Aorta (tissue), 5 donors: ENCODE measurements at regions of chr12 and their contacts with region 1.

Region 1: DNA sequence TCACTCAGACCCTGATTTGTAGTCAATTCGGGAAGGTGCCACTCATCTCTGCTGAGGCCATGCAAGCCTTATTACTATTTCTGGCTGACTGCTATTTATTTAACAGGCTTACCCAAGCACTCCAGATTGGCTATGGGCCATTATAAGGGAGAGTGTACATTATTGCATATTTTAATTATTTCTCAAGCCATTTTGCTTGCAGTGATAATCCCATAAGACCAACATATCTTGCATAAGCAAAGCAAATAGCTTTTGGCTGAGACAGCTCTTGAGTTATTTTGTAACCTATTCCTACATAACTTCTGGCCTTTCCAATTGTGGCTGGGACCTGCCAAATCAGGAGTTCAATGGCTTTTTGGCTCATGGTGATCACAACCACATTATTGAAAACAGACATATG is 509.6 kb upstream of the USP15 start:
- DNase-seq: no peak
- ATAC-seq: no peak
- H3K4me3 ChIP-seq: no peak overlapping the region
- H3K27ac ChIP-seq: peak overlapping the region; percentile 19 to 25
- H3K4me1 ChIP-seq: no peaks in the 10 kb centered on the region
- H3K27me3 ChIP-seq: no peaks in the 10 kb centered on the region

Region 2: GRCh38 chr12:61701471-61701870 is 49.1 kb before region 1 on chr12:
- intact Hi-C with region 1: loop called in 1 of 2 experiments (anchors 2 kb)
- DNase-seq: no peak
- ATAC-seq: no peak
- H3K4me3 ChIP-seq: no peak overlapping the region
- H3K27ac ChIP-seq: no peak overlapping the region
- H3K4me1 ChIP-seq: peaks cover 0 to 3% of the 10 kb centered on the region in 2 donors
- H3K27me3 ChIP-seq: no peaks in the 10 kb centered on the region

Region 3: DNA sequence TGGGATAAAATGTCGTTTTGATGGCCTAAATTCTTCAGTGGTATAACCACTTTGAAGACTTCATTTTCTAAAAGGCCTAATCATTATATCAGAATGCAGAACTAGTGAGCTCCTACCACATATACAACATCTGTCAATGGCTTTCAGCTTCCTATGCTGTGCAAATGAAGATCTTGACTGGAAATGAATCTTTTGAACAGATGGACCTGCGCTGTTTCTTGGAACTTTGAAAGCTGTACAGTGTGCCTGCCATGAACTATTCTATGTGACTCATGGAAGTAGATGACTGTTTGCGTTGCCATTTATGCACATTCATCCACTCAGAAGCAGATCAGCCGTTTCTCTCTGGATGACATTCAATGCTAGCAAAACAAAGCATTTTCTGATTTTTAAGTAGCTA is 32.6 kb before region 1 on chr12:
- intact Hi-C with region 1: loop called in 1 of 2 experiments (anchors 5 kb)
- DNase-seq: no peak
- ATAC-seq: no peak
- H3K4me3 ChIP-seq: no peak overlapping the region
- H3K27ac ChIP-seq: no peak overlapping the region
- H3K4me1 ChIP-seq: peaks cover 0 to 7% of the 10 kb centered on the region in 2 donors
- H3K27me3 ChIP-seq: no peaks in the 10 kb centered on the region

Region 4: DNA sequence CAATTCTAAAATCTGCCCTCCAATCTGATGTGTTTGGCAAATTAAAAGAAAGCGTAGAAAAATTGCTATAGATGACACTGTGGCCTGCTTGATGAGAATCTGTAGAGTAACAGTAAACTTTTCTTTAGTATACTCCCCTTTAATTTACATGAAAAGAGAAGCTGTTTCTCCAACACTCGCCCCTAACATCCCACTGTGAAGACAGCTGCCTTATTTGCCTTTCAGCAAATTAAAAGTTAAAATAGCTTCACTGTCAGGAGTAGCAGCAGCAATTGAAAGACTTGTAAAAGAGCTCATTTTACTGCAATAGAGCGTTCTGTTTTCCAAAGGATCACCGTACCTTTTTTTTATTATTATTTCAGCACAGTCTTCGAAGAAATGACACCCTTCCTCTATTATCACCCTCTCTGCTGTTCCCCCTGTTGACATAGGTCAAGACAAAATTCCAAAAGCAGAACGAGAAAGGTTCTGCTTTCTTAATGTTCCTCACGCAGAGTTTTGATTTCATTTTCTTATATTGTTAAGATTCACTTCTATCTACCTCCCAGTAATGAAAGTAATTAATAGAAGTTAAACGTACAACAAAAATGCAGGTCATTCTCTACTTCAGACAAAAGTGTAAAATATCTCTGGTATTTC is 356.1 kb after region 1 on chr12:
- intact Hi-C with region 1: no loop called
- DNase-seq: no peak
- ATAC-seq: no peak
- H3K4me3 ChIP-seq: peak overlapping the region in 1 of 2 donors; percentile 34
- H3K27ac ChIP-seq: no peak overlapping the region
- H3K4me1 ChIP-seq: no peaks in the 10 kb centered on the region
- H3K27me3 ChIP-seq: no peaks in the 10 kb centered on the region